Spleen (tissue), 13 donors: ENCODE measurements at regions of chr1 and their contacts with region 1.

Region 1: DNA sequence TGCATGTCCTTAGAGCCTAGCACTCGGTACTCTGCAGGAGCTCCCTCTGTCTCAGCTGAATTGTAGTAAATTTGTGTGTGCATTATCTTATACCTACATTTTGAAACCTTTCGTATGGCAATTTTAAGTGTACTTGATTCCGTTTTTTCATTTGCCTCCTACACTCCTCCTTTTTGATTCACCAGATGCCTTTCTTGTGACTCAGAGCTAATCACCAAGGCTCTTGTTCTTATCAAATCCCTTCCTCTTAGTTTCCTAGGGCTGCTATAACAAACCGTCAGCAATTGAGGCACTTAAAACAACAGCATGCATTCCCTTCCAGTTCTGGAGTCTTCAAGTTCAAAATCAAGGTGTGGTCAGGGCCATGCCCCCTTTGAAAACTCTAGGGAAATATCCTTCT is 261.0 kb downstream of the ASTN1 start:
- DNase-seq: no peak
- H3K4me3 ChIP-seq: no peak overlapping the region
- H3K27ac ChIP-seq: no peak overlapping the region
- H3K4me1 ChIP-seq: no peaks in the 10 kb centered on the region
- H3K27me3 ChIP-seq: peaks cover 0 to 38% (median 0%) of the 10 kb centered on the region in 7 donors
- CTCF ChIP-seq: no peak
- POLR2A ChIP-seq: no peak

Region 2: GRCh38 chr1:177181631-177182291 is 278.3 kb after region 1 on chr1:
- intact Hi-C with region 1: loop called (anchors 5 kb)
- DNase-seq: peak; percentile 82
- H3K4me3 ChIP-seq: peak overlapping the region in 3 of 8 donors; percentile 3 to 54 (median 32)
- H3K27ac ChIP-seq: no peak overlapping the region
- H3K4me1 ChIP-seq: peaks cover 0 to 10% (median 8%) of the 10 kb centered on the region in 6 donors
- H3K27me3 ChIP-seq: peaks cover 0 to 28% (median 0%) of the 10 kb centered on the region in 7 donors
- CTCF ChIP-seq: peak; percentile 20 to 82 (median 73)
- POLR2A ChIP-seq: no peak

Region 3: GRCh38 chr1:177780096-177780700 is 876.7 kb after region 1 on chr1:
- intact Hi-C with region 1: loop called (anchors 10 kb)
- DNase-seq: no peak
- H3K4me3 ChIP-seq: no peak overlapping the region
- H3K27ac ChIP-seq: no peak overlapping the region
- H3K4me1 ChIP-seq: peaks cover 0 to 5% (median 0%) of the 10 kb centered on the region in 6 donors
- H3K27me3 ChIP-seq: no peaks in the 10 kb centered on the region
- CTCF ChIP-seq: peak in 10 of 11 experiments; percentile 8 to 62 (median 40)
- POLR2A ChIP-seq: no peak